ENCODE measurements at regions of chr2 and their contacts with region 1.

Region 1: DNA sequence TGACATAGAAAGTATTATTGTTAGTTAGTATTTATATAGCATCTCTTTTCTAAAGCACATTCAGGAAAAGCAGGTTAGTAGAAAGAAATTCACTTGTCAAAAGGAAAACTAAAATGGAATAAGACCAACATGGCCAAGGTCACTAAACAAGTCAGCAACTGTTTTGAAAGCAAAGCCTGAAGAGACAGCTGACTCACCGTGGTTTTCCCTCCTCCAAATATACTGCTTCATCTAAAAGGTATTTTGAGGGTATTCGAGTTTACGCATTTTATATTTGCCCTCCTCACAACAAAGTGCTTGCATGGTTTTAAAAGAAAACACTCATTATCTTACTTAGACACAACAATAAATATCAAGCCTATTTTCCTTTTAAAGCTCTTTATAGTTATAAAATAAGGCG is 24.0 kb downstream of the ZNF385B start:
- DNase-seq: peak; percentile 71
- H3K4me3 ChIP-seq: no peak overlapping the region
- CTCF ChIP-seq: no peak

Region 2: GRCh38 chr2:179773986-179774385 is 63.4 kb before region 1 on chr2:
- in situ Hi-C with region 1: loop called (anchors 5 kb)
- DNase-seq: no peak
- H3K4me3 ChIP-seq: no peak overlapping the region
- CTCF ChIP-seq: no peak

Region 3: GRCh38 chr2:179898873-179899272 is 61.5 kb after region 1 on chr2:
- in situ Hi-C with region 1: no loop called
- DNase-seq: peak; percentile 0
- H3K4me3 ChIP-seq: no peak overlapping the region
- CTCF ChIP-seq: peak; percentile 35